H1 (cell line): ENCODE measurements at regions of chr1 and their contacts with region 1.

Region 1: GRCh38 chr1:113072757-113073478 is at the start of gene LRIG2:
- DNase-seq: peak; percentile 98
- H3K4me3 ChIP-seq: peak within 1 kb of the TSS; percentile 52 to 97 (median 88)
- H3K27ac ChIP-seq: peak within 1 kb of the TSS; percentile 92
- H3K4me1 ChIP-seq: peaks cover 0 to 5% (median 2%) of the 10 kb centered on the region in 4 experiments; a peak in 4 of 7 replicates
- H3K27me3 ChIP-seq: no peaks in the 10 kb centered on the region
- CTCF ChIP-seq: peak; percentile 72 to 83 (median 76)
- EP300 ChIP-seq: no peak
- POLR2A ChIP-seq: peak; percentile 85 to 86
- RAD21 ChIP-seq: peak; percentile 75 to 80
- total RNA-seq, gene LRIG2: 20.4 and 20.9 TPM in 2 replicates

Region 2: DNA sequence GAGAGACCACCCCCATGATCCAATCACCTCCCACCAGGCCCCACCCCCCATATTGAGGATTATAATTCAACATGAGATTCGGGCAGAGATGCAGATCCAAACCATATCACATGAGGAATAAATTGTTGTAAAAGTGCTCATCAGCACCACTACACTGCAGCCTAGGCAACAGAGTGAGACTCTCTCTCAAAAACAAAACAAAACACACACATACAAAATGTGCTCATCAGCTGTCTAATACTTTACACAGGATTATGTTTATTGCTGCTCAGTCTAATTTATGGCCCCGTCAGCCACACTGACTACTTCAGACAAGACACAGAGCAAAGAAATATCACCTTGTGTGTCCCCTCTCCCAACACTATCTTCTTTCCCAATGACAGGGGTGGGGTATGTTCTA is 284.9 kb before region 1 on chr1:
- CTCF ChIA-PET with region 1: no interaction called
- POLR2A ChIA-PET with region 1: no interaction called
- DNase-seq: no peak
- H3K4me3 ChIP-seq: no peak overlapping the region
- H3K27ac ChIP-seq: no peak overlapping the region
- H3K4me1 ChIP-seq: peaks cover 0 to 3% (median 1%) of the 10 kb centered on the region in 4 experiments; a peak in 2 of 7 replicates
- H3K27me3 ChIP-seq: no peaks in the 10 kb centered on the region; a peak in 1 of 7 replicates
- CTCF ChIP-seq: no peak
- EP300 ChIP-seq: no peak
- POLR2A ChIP-seq: no peak
- RAD21 ChIP-seq: no peak

Region 3: GRCh38 chr1:112925015-112925414 is 147.9 kb before region 1 on chr1:
- CTCF ChIA-PET with region 1: interaction called, 13 read pairs
- POLR2A ChIA-PET with region 1: interaction called, 5 read pairs
- DNase-seq: no peak
- H3K4me3 ChIP-seq: no peak overlapping the region
- H3K27ac ChIP-seq: no peak overlapping the region
- H3K4me1 ChIP-seq: no peaks in the 10 kb centered on the region; a peak in 1 of 7 replicates
- H3K27me3 ChIP-seq: no peaks in the 10 kb centered on the region
- CTCF ChIP-seq: peak in 1 of 3 experiments; percentile 2; a peak in 1 of 4 replicates
- EP300 ChIP-seq: no peak
- POLR2A ChIP-seq: no peak
- RAD21 ChIP-seq: no peak

Region 4: GRCh38 chr1:112955781-112956543 is 117.0 kb before region 1 on chr1 and contains the start of gene SLC16A1:
- CTCF ChIA-PET with region 1: interaction called, 16 read pairs
- POLR2A ChIA-PET with region 1: interaction called, 8 read pairs
- DNase-seq: peak; percentile 49 to 89
- H3K4me3 ChIP-seq: peak within 1 kb of the TSS; percentile 81 to 95 (median 90)
- H3K27ac ChIP-seq: peak within 1 kb of the TSS; percentile 79
- H3K4me1 ChIP-seq: peaks cover 4 to 8% (median 5%) of the 10 kb centered on the region in 4 experiments; a peak in 5 of 7 replicates
- H3K27me3 ChIP-seq: no peaks in the 10 kb centered on the region
- CTCF ChIP-seq: peak in 2 of 3 experiments; percentile 21 to 22; a peak in 2 of 4 replicates
- EP300 ChIP-seq: no peak
- POLR2A ChIP-seq: peak; percentile 47 to 67
- RAD21 ChIP-seq: no peak; a peak in 1 of 4 replicates
- total RNA-seq, gene SLC16A1: 435 and 442 TPM in 2 replicates

Region 5: GRCh38 chr1:113057006-113057405 is 15.9 kb before region 1 on chr1:
- CTCF ChIA-PET with region 1: interaction called, 85 read pairs
- POLR2A ChIA-PET with region 1: interaction called, 9 read pairs
- DNase-seq: no peak
- H3K4me3 ChIP-seq: no peak overlapping the region
- H3K27ac ChIP-seq: peak overlapping the region; percentile 27; the same call in 1 of the 2 replicates
- H3K4me1 ChIP-seq: peaks cover 3 to 13% (median 11%) of the 10 kb centered on the region in 4 experiments; a peak in 4 of 7 replicates
- H3K27me3 ChIP-seq: no peaks in the 10 kb centered on the region
- CTCF ChIP-seq: peak; percentile 9 to 15 (median 12); a peak in 3 of 4 replicates
- EP300 ChIP-seq: no peak
- POLR2A ChIP-seq: no peak
- RAD21 ChIP-seq: peak in 1 of 2 experiments; percentile 42; a peak in 2 of 4 replicates

Region 6: GRCh38 chr1:113170519-113170918 is 97.6 kb after region 1 on chr1:
- CTCF ChIA-PET with region 1: no interaction called
- POLR2A ChIA-PET with region 1: no interaction called
- DNase-seq: no peak
- H3K4me3 ChIP-seq: no peak overlapping the region
- H3K27ac ChIP-seq: no peak overlapping the region
- H3K4me1 ChIP-seq: no peaks in the 10 kb centered on the region
- H3K27me3 ChIP-seq: no peaks in the 10 kb centered on the region
- CTCF ChIP-seq: no peak
- EP300 ChIP-seq: no peak
- POLR2A ChIP-seq: no peak
- RAD21 ChIP-seq: no peak

Region 7: GRCh38 chr1:113219377-113219776 is 146.5 kb after region 1 on chr1:
- CTCF ChIA-PET with region 1: no interaction called
- POLR2A ChIA-PET with region 1: no interaction called
- DNase-seq: no peak
- H3K4me3 ChIP-seq: no peak overlapping the region
- H3K27ac ChIP-seq: no peak overlapping the region
- H3K4me1 ChIP-seq: peaks cover 0 to 7% (median 0%) of the 10 kb centered on the region in 4 experiments; a peak in 2 of 7 replicates
- H3K27me3 ChIP-seq: no peaks in the 10 kb centered on the region
- CTCF ChIP-seq: peak; percentile 65 to 84 (median 66)
- EP300 ChIP-seq: no peak
- POLR2A ChIP-seq: no peak
- RAD21 ChIP-seq: peak; percentile 57 to 73